ENCODE measurements at regions of chr11 and their contacts with region 1.

Region 1: GRCh38 chr11:111777094-111778046 is 11.2 kb upstream of the PPP2R1B start:
- DNase-seq: peak; percentile 41
- H3K4me3 ChIP-seq: no peak overlapping the region
- CTCF ChIP-seq: peak; percentile 62

Region 2: DNA sequence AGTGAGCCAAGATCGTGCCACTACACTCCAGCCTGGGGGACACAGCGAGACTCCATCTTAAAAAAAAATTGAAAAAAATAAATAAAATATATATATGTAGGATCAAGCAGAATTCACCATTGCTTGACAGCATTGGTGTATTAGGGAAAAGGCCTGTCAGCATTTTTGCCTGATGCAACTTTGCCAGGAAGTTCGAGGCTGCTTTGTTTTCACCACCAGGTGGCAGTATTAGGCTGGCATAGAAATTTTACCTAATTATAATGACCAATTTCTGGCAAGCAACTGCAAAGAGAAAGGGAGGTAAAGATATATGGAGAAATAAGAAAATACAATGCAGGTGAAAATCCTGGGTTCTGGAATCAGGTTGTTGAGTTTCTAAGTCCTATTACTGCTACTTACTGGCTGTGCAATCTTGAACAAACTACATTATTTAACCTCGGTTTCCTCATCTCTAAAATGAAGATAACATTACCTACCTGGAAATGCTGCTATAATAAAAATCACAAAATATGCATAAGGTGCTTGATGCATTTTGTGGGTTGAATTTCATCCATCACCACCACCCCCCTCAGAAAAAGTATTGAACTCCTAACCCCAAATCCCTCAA is 212.2 kb before region 1 on chr11:
- CTCF ChIA-PET with region 1: interaction called, 42 read pairs
- POLR2A ChIA-PET with region 1: no interaction called
- DNase-seq: no peak
- H3K4me3 ChIP-seq: no peak overlapping the region
- CTCF ChIP-seq: peak; percentile 62

Region 3: GRCh38 chr11:111735262-111736116 is 41.9 kb before region 1 on chr11:
- CTCF ChIA-PET with region 1: interaction called, 11 read pairs
- POLR2A ChIA-PET with region 1: no interaction called
- DNase-seq: peak; percentile 93
- H3K4me3 ChIP-seq: peak overlapping the region; percentile 46
- CTCF ChIP-seq: no peak

Region 4: GRCh38 chr11:111788051-111788450 is 10.7 kb after region 1 on chr11:
- CTCF ChIA-PET with region 1: interaction called, 48 read pairs
- POLR2A ChIA-PET with region 1: no interaction called
- DNase-seq: no peak
- H3K4me3 ChIP-seq: no peak overlapping the region
- CTCF ChIP-seq: no peak

Region 5: DNA sequence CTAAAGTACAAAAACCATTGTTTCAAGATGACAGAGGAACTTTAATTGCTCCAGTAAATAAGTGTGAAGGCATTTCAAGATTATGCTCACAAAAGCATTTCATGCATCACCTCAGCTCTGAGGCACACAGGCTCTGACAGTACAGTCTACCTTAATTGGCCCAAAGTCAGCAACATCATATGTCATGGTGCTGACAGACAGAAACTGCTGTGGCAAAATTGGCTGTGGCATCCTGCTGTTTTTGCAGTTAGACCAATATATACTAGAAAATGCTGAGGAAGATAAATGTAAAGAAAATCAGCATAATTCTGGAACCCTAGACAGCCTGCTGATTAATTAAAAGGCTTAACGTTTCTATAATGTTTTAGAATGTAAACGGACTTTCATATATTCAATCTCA is 23.8 kb after region 1 on chr11:
- CTCF ChIA-PET with region 1: interaction called, 10 read pairs
- POLR2A ChIA-PET with region 1: no interaction called
- DNase-seq: no peak
- H3K4me3 ChIP-seq: no peak overlapping the region
- CTCF ChIP-seq: no peak

Region 6: DNA sequence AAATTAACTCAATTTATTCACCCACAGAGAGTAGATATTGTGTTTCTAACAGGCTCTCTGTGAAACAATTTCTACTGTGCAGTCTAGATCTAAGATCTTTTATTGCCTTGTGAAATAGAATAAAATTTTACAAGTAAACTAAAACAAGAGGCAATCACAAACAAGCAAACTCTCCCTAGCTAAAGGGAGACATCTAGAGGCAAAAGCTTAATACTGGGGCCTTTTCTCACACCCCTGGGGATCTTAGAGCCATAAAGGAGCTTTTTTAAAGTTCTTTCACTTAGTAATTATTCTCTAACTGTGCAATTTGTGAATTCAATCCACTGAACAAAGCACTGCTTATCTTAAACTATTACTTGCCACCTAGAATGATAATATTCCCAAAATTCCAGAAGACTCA is 74.3 kb after region 1 on chr11:
- CTCF ChIA-PET with region 1: interaction called, 14 read pairs
- POLR2A ChIA-PET with region 1: no interaction called
- DNase-seq: no peak
- H3K4me3 ChIP-seq: no peak overlapping the region
- CTCF ChIP-seq: peak; percentile 35

Region 7: GRCh38 chr11:111938687-111939160 is 161.4 kb after region 1 on chr11:
- CTCF ChIA-PET with region 1: no interaction called
- POLR2A ChIA-PET with region 1: no interaction called
- DNase-seq: no peak
- H3K4me3 ChIP-seq: peak overlapping the region; percentile 69
- CTCF ChIP-seq: no peak

Measured in AG04449 (cell line).